SK-N-SH (cell line): ENCODE measurements at regions of chr5 and their contacts with region 1.

Region 1: DNA sequence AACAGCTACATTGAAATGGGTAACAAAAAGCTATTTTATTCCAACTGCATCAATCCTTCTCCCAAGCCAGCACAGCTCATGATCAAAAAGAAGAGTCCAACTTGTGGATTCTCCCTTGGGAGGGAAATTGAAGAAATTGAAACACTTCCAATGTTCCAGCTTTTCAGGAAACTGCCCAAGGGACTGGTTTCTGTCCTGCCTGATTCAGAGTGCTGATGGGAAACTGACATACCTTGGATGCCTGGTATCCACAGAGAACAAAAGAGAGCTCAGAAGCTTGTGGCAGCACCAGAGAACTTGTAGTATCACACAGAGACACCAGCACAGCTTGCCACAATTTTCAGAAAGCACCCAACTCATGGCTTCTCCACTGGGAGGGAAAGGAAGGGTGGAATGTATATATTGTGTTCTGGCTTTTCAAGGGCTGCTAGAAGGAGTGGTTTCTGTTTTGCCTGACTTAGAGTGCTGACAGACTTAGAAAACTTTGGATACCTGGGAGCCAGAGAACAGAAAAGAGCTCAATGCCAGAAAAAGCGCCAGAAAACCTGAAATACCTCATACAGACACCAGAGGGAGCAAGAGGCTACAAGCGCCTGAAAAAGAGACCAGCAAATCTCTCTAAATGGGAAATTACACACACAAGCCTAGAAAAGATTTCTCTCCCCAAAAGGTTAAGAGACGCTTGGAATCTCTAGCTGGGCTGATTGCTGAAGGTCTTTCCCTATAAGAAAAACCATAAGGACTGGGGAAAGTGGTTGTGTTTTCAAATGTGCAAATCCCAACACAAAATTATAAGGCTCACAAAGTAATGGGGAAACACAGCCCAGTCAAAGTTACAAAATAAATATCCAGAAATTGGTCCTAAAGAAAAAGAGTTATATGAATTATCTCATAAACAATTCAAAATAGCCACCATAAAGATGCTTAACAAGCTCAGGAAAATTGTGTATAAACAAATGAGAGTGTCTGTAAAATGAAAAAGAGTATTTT is 178.8 kb downstream of the SPOCK1 start:
- DNase-seq: peak; percentile 68
- H3K4me3 ChIP-seq: peak overlapping the region in 1 of 2 experiments; percentile 5; a peak in 1 of 4 replicates
- H3K27ac ChIP-seq: peak overlapping the region in 1 of 2 experiments; percentile 17; a peak in 1 of 4 replicates
- H3K4me1 ChIP-seq: peaks cover 3 to 21% of the 10 kb centered on the region in 2 experiments; a peak in 2 of 4 replicates
- H3K27me3 ChIP-seq: no peaks in the 10 kb centered on the region
- CTCF ChIP-seq: peak; percentile 79
- EP300 ChIP-seq: no peak
- RAD21 ChIP-seq: peak; percentile 89

Region 2: GRCh38 chr5:137310051-137310730 is 10.2 kb before region 1 on chr5:
- CTCF ChIA-PET with region 1: interaction called, 34 read pairs
- POLR2A ChIA-PET with region 1: no interaction called
- DNase-seq: no peak
- H3K4me3 ChIP-seq: no peak overlapping the region
- H3K27ac ChIP-seq: peak overlapping the region in 1 of 2 experiments; percentile 78; a peak in 2 of 4 replicates
- H3K4me1 ChIP-seq: peaks cover 12 to 23% of the 10 kb centered on the region in 2 experiments
- H3K27me3 ChIP-seq: no peaks in the 10 kb centered on the region
- CTCF ChIP-seq: no peak
- EP300 ChIP-seq: peak in 1 of 2 experiments; percentile 56; a peak in 2 of 4 replicates
- RAD21 ChIP-seq: no peak

Region 3: DNA sequence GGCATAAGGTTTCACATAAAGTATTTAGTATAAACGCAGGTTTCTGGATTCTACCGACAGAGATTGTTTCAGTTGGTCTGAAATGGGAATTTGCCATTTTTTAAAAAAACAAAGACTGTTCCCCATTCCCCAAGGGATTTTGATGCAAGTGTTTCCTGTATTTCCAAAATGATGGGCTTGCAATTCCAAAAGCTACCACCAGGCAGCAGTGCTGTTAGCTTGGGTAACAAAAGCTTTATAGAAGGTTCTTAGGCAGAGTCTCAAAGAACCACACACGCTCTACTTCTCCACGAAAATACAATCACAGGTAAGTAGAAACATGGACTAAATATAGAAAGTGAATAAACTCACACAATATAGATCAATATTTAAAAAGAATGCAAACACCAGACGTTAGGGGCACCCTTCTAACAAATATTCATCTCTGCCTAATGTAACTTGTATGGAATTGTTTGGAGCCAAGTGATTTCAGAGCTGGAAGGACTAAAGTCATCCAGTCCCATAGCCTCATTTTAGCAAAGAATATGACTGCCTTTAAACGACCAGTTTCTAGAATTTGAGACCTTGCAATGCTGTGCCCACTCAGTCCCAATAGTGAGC is 24.5 kb after region 1 on chr5:
- CTCF ChIA-PET with region 1: interaction called, 76 read pairs
- POLR2A ChIA-PET with region 1: no interaction called
- DNase-seq: peak; percentile 28
- H3K4me3 ChIP-seq: peak overlapping the region in 1 of 2 experiments; percentile 18; a peak in 1 of 4 replicates
- H3K27ac ChIP-seq: no peak overlapping the region
- H3K4me1 ChIP-seq: peaks cover 12 to 14% of the 10 kb centered on the region in 2 experiments; a peak in 3 of 4 replicates
- H3K27me3 ChIP-seq: no peaks in the 10 kb centered on the region
- CTCF ChIP-seq: peak; percentile 81
- EP300 ChIP-seq: no peak
- RAD21 ChIP-seq: peak; percentile 80

Region 4: DNA sequence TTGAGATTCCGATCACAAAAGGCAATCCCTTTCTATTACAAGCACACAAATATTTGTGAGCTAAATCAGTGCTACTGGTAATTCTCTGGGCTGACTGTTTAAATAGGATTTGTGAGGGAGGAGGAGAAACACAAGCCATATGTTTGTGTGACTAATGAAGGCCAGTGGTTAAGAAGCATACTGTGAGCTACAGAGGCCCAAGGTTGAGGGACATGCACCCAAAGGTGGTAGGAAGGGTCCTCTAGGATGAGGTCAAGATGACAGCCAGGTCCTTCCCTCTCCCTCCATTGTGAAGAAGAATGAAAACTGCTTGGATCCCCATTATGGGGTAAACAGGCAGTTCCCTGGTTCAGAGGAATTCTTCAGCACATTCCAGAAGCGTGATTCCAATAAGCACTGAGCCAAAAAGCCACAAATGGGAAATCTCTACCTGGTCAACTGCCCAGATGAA is 94.9 kb after region 1 on chr5:
- CTCF ChIA-PET with region 1: interaction called, 10 read pairs
- POLR2A ChIA-PET with region 1: no interaction called
- DNase-seq: no peak
- H3K4me3 ChIP-seq: no peak overlapping the region
- H3K27ac ChIP-seq: peak overlapping the region; percentile 21 to 86; a peak in 3 of 4 replicates
- H3K4me1 ChIP-seq: peaks cover 4 to 36% of the 10 kb centered on the region in 2 experiments; a peak in 3 of 4 replicates
- H3K27me3 ChIP-seq: no peaks in the 10 kb centered on the region
- CTCF ChIP-seq: no peak
- EP300 ChIP-seq: no peak
- RAD21 ChIP-seq: no peak

Region 5: DNA sequence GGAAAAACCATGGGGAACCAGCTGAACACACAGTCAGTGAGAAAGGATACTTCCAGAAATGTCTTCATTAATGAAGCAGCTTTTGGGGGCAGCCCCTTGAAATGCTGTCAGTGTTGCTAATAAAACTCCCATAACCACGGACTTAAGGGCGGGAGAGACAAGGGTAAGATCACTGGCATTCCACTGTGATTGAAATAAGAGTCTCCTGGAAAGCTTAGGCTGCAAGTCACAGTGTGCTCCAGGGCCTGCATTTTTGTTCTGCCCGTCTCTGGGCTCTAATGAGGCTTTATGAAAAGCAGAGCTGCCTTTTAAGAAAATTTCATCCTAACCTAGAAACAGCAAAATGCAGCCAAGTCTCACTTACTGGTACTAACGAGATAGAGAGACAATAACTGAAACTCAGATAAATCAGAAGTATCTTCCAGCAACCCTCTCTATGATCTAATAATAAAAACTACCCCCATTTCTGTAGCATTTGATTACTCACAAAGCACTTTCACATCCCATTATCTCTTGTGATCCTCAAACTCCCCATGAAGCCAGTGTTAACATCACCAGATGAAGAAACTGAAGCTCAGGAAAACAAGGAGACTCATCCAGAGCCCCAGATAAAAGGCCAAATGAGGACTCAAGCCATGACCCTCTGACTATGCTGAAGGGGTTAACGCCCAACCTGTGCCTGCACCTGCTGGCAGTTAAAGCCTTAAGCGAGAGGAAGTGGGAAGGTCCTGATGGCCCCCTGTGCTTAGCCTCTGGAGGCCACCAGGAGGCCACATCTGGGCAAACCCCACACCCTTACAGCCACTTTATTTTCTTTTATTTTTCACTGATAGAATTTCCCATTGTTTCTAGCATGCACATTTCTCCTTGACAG is 141.3 kb after region 1 on chr5:
- CTCF ChIA-PET with region 1: interaction called, 34 read pairs
- POLR2A ChIA-PET with region 1: no interaction called
- DNase-seq: peak; percentile 14
- H3K4me3 ChIP-seq: no peak overlapping the region
- H3K27ac ChIP-seq: peak overlapping the region; percentile 7 to 90; a peak in 3 of 4 replicates
- H3K4me1 ChIP-seq: peaks cover 13 to 31% of the 10 kb centered on the region in 2 experiments
- H3K27me3 ChIP-seq: no peaks in the 10 kb centered on the region
- CTCF ChIP-seq: peak; percentile 35
- EP300 ChIP-seq: peak in 1 of 2 experiments; percentile 82; a peak in 2 of 4 replicates
- RAD21 ChIP-seq: no peak

Region 6: DNA sequence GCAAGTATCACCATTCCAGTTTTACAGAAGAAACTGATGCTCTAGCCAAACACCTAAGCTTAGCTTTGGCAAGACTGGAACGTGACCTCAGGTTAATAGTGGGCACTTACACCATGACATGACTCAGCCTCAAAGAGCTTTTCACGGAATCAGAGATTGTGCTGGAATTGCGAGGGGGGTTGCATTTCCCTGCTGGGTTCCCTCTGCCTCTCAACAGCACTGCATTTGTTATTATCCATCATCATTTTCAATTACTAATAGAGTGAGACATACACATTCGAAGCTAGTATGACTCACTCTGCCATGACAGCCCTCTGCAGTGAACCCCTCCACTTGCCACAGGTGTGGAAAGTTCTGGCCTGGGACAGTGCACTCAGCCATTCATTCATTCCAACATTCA is 170.8 kb after region 1 on chr5:
- CTCF ChIA-PET with region 1: interaction called, 140 read pairs
- POLR2A ChIA-PET with region 1: interaction called, 4 read pairs
- DNase-seq: no peak
- H3K4me3 ChIP-seq: no peak overlapping the region
- H3K27ac ChIP-seq: peak overlapping the region in 1 of 2 experiments; percentile 77; a peak in 2 of 4 replicates
- H3K4me1 ChIP-seq: peaks cover 0 to 22% of the 10 kb centered on the region in 2 experiments; a peak in 2 of 4 replicates
- H3K27me3 ChIP-seq: no peaks in the 10 kb centered on the region
- CTCF ChIP-seq: no peak
- EP300 ChIP-seq: no peak
- RAD21 ChIP-seq: no peak

Region 7: DNA sequence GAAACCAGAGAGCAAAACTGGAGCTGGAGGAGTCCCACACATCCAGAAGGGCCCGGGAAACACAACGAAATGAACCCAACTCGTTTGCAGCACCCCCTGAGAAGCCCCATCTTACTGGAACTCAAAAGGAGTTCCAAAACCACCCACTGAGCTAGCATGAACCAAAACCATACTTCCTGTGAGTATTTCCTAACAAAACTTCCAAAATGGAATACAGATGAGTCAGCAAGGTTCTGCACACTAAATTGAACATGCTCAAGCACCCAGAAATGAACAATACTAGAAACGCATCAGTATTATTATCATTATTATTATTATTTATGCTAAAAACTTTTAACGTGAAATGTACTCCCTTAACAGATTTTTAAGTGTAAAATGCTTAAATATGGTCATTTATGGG is 186.8 kb after region 1 on chr5:
- CTCF ChIA-PET with region 1: interaction called, 25 read pairs
- POLR2A ChIA-PET with region 1: no interaction called
- DNase-seq: no peak
- H3K4me3 ChIP-seq: no peak overlapping the region
- H3K27ac ChIP-seq: no peak overlapping the region
- H3K4me1 ChIP-seq: no peaks in the 10 kb centered on the region; a peak in 1 of 4 replicates
- H3K27me3 ChIP-seq: no peaks in the 10 kb centered on the region
- CTCF ChIP-seq: no peak
- EP300 ChIP-seq: no peak
- RAD21 ChIP-seq: no peak